ENCODE measurements at regions of chr5 and their contacts with region 1.

Region 1: GRCh38 chr5:151447174-151448037 is at the start of gene SLC36A1:
- DNase-seq: peak; percentile 93 to 96 (median 95)
- H3K4me3 ChIP-seq: peak within 1 kb of the TSS; percentile 49 to 95 (median 83)
- H3K27ac ChIP-seq: peak within 1 kb of the TSS in 53 of 59 donors; percentile 7 to 89 (median 78)
- H3K27me3 ChIP-seq: no peaks in the 10 kb centered on the region
- CTCF ChIP-seq: peak; percentile 98 to 100 (median 99)
- total RNA-seq, gene SLC36A1: 18.6 to 85.7 (median 43.3) TPM

Region 2: GRCh38 chr5:151252762-151253604 is 194.4 kb before region 1 on chr5 and contains the start of gene GM2A:
- intact Hi-C with region 1: loop called (anchors 5 to 10 kb)
- DNase-seq: peak; percentile 96 to 100 (median 99)
- H3K4me3 ChIP-seq: peak within 1 kb of the TSS; percentile 61 to 99 (median 90)
- H3K27ac ChIP-seq: peak within 1 kb of the TSS in 55 of 59 donors; percentile 10 to 91 (median 79)
- H3K27me3 ChIP-seq: no peaks in the 10 kb centered on the region
- CTCF ChIP-seq: peak in 11 of 56 donors; percentile 4 to 47 (median 21)
- total RNA-seq, gene GM2A: 25.4 to 82.0 (median 40.5) TPM

Region 3: GRCh38 chr5:151499501-151500035 is 52.2 kb after region 1 on chr5:
- intact Hi-C with region 1: loop called (anchors 1 to 2 kb)
- DNase-seq: no peak
- H3K4me3 ChIP-seq: no peak overlapping the region
- H3K27ac ChIP-seq: peak overlapping the region in 1 of 59 donors; percentile 58
- H3K27me3 ChIP-seq: no peaks in the 10 kb centered on the region
- CTCF ChIP-seq: no peak

Region 4: DNA sequence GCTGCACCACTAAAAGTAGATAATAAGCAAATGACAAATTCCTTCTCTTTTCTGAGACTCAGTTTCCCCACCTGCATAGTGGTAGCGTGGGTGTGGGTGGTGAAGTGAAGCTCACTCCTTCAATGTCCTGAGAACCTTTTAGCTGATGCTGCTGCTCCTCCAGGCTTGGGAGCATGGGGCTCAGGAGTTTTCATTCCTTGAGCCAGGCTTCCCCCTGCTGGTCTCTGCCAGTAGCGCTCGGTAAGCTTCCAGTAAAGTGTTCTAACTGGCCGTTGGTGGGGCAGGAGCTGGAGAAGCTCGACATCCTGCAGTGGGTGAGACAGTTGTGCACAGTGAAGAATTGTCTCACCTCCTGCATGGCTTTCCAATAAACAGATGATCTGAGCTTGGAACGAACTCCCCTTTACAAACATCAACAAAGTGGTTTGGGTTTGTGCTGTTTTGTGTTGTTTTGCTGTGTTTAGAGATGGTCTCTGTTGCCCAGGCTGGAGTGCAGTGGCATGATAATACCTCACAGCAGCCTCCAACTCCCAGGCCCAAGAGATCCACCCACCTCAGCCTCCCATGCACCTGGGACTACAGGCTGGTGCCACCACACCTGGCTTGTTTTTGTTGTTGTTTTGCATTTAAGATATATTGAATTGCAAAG is 204.7 kb after region 1 on chr5:
- intact Hi-C with region 1: loop called (anchors 1 kb)
- DNase-seq: peak; percentile 67 to 90 (median 84)
- H3K4me3 ChIP-seq: no peak overlapping the region
- H3K27ac ChIP-seq: no peak overlapping the region
- H3K27me3 ChIP-seq: no peaks in the 10 kb centered on the region
- CTCF ChIP-seq: peak; percentile 62 to 93 (median 88)

Region 5: DNA sequence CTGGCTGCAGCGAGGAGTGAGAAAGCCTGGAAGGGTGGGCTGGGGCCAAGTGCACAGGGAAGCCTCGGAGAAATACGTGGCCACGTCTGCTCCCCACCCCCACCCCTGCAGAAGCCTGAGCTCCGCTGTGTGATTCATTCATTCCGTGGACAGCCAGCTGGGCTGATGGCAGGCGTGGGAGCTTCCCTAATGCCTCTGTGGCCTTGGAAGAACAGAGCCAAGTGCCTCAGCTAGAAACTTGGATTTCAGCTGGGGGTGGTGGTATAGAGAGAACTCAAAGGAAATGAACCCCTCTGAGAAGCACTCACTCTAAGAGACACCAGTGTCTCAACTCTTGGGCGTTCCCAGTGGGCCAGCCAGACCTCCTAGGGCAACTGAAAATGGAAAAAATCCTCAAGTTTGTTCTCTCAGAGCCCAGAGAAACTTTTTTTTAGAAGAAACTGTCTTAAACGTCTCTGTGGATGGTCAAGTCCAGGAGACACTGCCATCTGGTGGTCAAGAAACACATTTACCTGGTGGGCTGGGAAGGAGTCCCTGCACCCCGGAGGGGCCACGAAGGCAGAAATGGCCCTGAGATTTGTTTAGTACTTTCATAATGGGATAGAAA is 293.0 kb after region 1 on chr5:
- intact Hi-C with region 1: loop called (anchors 2 kb)
- DNase-seq: peak in 6 of 10 donors; percentile 28 to 57 (median 50)
- H3K4me3 ChIP-seq: peak overlapping the region in 7 of 59 donors; percentile 2 to 39 (median 12)
- H3K27ac ChIP-seq: peak overlapping the region in 36 of 59 donors; percentile 6 to 76 (median 42)
- H3K27me3 ChIP-seq: no peaks in the 10 kb centered on the region
- CTCF ChIP-seq: peak; percentile 81 to 98 (median 93)

Measured in dorsolateral prefrontal cortex (tissue), 120 donors.